Activated naive CD4-positive, alpha-beta T cell treated with anti-CD3 and anti-CD28 coated beads for 36 hours (primary cell): ENCODE measurements at regions of chr3 and their contacts with region 1.

Region 1: DNA sequence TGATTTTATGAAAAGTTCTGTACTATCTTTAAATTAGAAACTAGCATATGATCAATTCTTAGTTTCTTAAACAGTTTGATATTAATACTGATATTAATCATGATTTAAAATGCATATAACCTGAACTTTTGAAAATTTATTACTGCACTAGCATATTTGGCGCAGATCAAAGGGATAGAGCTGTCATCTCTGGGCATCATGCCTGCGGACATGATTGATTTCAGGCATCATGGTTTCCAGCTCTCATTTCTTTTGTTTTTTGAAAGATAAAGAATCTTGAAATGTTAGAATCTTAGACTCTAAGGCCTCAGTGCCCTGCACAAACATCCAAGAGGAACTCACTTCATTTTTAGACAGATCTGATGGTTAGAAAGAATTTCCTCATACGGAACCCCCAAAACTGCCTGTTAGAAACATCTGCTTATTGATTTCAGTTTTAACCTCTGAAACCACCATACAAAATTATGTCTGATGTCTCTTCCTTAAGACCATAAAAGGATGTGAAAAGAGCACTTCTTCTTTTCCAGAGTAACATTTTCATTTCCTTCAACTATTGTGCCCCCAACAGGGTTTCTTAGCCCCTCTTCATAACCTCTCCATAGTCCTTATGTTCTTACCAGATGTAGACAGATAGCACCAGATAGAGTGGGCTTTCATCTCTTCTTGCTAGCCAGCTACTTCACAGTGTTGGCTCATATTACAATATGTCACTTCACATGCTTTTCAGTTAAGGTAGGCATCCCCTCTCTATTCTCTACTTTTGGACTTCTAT is 110.8 kb downstream of the BBX start:
- DNase-seq: peak; percentile 15
- H3K4me3 Mint-ChIP-seq: no peak overlapping the region
- H3K27ac Mint-ChIP-seq: no peak overlapping the region
- H3K4me1 Mint-ChIP-seq: peaks cover 41% of the 10 kb centered on the region
- H3K27me3 Mint-ChIP-seq: no peaks in the 10 kb centered on the region

Region 2: GRCh38 chr3:107598926-107599771 is 34.4 kb before region 1 on chr3:
- CTCF ChIA-PET with region 1: interaction called, 4 read pairs
- intact Hi-C with region 1: loop called (anchors 1 kb)
- DNase-seq: peak; percentile 61
- H3K4me3 Mint-ChIP-seq: peak overlapping the region; percentile 79
- H3K27ac Mint-ChIP-seq: peak overlapping the region; percentile 85
- H3K4me1 Mint-ChIP-seq: peaks cover 50% of the 10 kb centered on the region
- H3K27me3 Mint-ChIP-seq: no peaks in the 10 kb centered on the region